ENCODE measurements at regions of chr17 and their contacts with region 1.

Region 1: GRCh38 chr17:29116804-29117772 is 63.1 kb downstream of the MYO18A start:
- DNase-seq: peak; percentile 60 to 86 (median 73)
- H3K4me3 ChIP-seq: no peak overlapping the region
- H3K4me3 Mint-ChIP-seq: no peak overlapping the region
- H3K27ac ChIP-seq: no peak overlapping the region
- H3K27ac Mint-ChIP-seq: peak overlapping the region in 4 of 8 donors; percentile 32 to 89 (median 68)
- H3K4me1 ChIP-seq: no peaks in the 10 kb centered on the region
- H3K4me1 Mint-ChIP-seq: peaks cover 4 to 8% (median 7%) of the 10 kb centered on the region in 3 donors
- H3K27me3 ChIP-seq: no peaks in the 10 kb centered on the region
- H3K27me3 Mint-ChIP-seq: no peaks in the 10 kb centered on the region

Region 2: GRCh38 chr17:28951991-28952975 is 164.8 kb before region 1 on chr17:
- CTCF ChIA-PET with region 1: interaction called, 23 read pairs
- POLR2A ChIA-PET with region 1: no interaction called
- DNase-seq: peak; percentile 91 to 98 (median 97)
- H3K4me3 ChIP-seq: peak overlapping the region; percentile 98
- H3K4me3 Mint-ChIP-seq: no peak overlapping the region
- H3K27ac ChIP-seq: peak overlapping the region; percentile 85
- H3K27ac Mint-ChIP-seq: no peak overlapping the region
- H3K4me1 ChIP-seq: peaks cover 27% of the 10 kb centered on the region
- H3K4me1 Mint-ChIP-seq: peaks cover 15 to 17% (median 15%) of the 10 kb centered on the region in 3 donors
- H3K27me3 ChIP-seq: no peaks in the 10 kb centered on the region
- H3K27me3 Mint-ChIP-seq: peaks cover 0 to 4% of the 10 kb centered on the region in 2 donors

Region 3: GRCh38 chr17:28973425-28973824 is 143.7 kb before region 1 on chr17:
- CTCF ChIA-PET with region 1: interaction called, 18 read pairs
- POLR2A ChIA-PET with region 1: no interaction called
- DNase-seq: no peak
- H3K4me3 ChIP-seq: no peak overlapping the region
- H3K4me3 Mint-ChIP-seq: no peak overlapping the region
- H3K27ac ChIP-seq: no peak overlapping the region
- H3K27ac Mint-ChIP-seq: no peak overlapping the region
- H3K4me1 ChIP-seq: no peaks in the 10 kb centered on the region
- H3K4me1 Mint-ChIP-seq: no peaks in the 10 kb centered on the region
- H3K27me3 ChIP-seq: no peaks in the 10 kb centered on the region
- H3K27me3 Mint-ChIP-seq: peaks cover 6 to 9% of the 10 kb centered on the region in 2 donors

Region 4: GRCh38 chr17:29100296-29100695 is 16.8 kb before region 1 on chr17:
- CTCF ChIA-PET with region 1: interaction called, 12 read pairs
- POLR2A ChIA-PET with region 1: no interaction called
- DNase-seq: no peak
- H3K4me3 ChIP-seq: no peak overlapping the region
- H3K4me3 Mint-ChIP-seq: no peak overlapping the region
- H3K27ac ChIP-seq: no peak overlapping the region
- H3K27ac Mint-ChIP-seq: peak overlapping the region in 3 of 8 donors; percentile 12 to 24 (median 12)
- H3K4me1 ChIP-seq: no peaks in the 10 kb centered on the region
- H3K4me1 Mint-ChIP-seq: peaks cover 0 to 9% (median 2%) of the 10 kb centered on the region in 3 donors
- H3K27me3 ChIP-seq: no peaks in the 10 kb centered on the region
- H3K27me3 Mint-ChIP-seq: no peaks in the 10 kb centered on the region

Region 5: DNA sequence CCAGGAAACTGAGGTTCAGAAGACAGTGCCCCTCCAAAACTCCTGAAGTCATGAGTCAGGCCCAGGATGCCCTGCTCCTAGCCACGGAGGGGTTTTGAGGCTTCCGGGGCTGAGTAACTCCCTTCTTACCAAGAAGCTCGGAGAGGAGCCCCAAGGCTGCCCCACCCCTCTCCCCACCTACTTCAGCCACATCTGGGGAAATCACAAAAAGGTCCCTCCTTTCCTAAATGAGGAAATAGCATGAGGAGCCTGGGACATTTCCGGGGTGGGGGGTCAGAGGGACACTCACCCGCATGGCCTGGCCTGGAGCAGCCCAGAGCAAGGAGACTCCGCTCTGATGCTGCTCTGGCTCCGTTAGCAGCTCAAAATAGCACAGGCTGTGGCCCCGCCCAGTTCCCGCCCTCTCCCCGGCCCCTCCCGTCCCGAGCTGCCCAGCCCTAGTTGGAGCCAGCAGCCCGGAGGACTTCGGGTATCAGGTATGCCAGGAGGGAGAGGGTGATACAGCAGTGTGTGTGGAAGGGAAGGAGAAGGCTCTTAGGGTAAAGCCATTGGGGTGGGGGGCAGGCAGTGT is 23.0 kb after region 1 on chr17:
- CTCF ChIA-PET with region 1: interaction called, 60 read pairs
- POLR2A ChIA-PET with region 1: no interaction called
- DNase-seq: peak; percentile 70 to 91 (median 74)
- H3K4me3 ChIP-seq: peak overlapping the region; percentile 62
- H3K4me3 Mint-ChIP-seq: peak overlapping the region; percentile 87 to 97 (median 95)
- H3K27ac ChIP-seq: peak overlapping the region; percentile 48
- H3K27ac Mint-ChIP-seq: peak overlapping the region; percentile 97 to 99 (median 98)
- H3K4me1 ChIP-seq: peaks cover 56% of the 10 kb centered on the region
- H3K4me1 Mint-ChIP-seq: peaks cover 61 to 90% (median 76%) of the 10 kb centered on the region in 3 donors
- H3K27me3 ChIP-seq: no peaks in the 10 kb centered on the region
- H3K27me3 Mint-ChIP-seq: peaks cover 0 to 2% of the 10 kb centered on the region in 2 donors

Region 6: DNA sequence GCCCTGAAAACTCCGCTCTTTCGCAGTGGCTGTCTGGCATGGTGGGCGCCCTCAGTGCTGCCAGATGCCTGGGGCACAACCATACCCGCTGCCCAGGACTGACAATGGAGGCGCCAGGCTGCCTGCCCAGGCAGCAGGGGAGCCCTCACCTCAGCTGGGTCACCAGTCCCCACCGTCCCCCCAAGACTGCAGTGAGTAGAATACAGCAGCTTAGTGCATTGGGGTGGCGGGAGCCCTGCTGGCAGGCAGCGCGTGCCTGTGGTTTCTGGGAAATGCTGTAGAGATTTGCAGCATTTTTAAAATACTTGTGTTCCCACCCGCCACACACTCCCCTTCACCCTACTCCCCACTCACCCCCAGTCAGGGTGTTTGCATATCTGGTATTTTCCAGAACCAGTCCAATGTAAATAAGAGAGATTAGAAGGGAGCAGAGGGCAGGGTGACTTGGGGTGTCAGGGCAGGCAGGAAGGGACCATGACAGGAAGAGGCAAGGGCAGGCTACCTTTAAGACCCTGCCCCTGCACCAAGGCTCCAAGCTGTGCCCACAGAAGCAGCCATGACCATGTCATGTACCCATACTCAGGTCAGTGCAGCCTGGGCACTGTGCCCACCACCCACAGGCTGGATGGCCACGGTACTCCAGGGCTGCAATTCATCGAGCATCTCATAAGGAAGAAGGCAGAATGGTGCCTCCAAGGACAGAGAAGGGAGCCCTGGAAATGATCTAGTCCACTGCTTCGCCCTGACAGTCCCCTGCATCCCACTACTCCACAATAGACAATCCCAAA is 41.6 kb after region 1 on chr17:
- CTCF ChIA-PET with region 1: no interaction called
- POLR2A ChIA-PET with region 1: no interaction called
- DNase-seq: no peak
- H3K4me3 ChIP-seq: no peak overlapping the region
- H3K4me3 Mint-ChIP-seq: peak overlapping the region in 5 of 7 donors; percentile 1 to 68 (median 48)
- H3K27ac ChIP-seq: no peak overlapping the region
- H3K27ac Mint-ChIP-seq: peak overlapping the region in 7 of 8 donors; percentile 60 to 97 (median 82)
- H3K4me1 ChIP-seq: peaks cover 32% of the 10 kb centered on the region
- H3K4me1 Mint-ChIP-seq: peaks cover 29 to 56% (median 33%) of the 10 kb centered on the region in 3 donors
- H3K27me3 ChIP-seq: no peaks in the 10 kb centered on the region
- H3K27me3 Mint-ChIP-seq: no peaks in the 10 kb centered on the region

Region 7: DNA sequence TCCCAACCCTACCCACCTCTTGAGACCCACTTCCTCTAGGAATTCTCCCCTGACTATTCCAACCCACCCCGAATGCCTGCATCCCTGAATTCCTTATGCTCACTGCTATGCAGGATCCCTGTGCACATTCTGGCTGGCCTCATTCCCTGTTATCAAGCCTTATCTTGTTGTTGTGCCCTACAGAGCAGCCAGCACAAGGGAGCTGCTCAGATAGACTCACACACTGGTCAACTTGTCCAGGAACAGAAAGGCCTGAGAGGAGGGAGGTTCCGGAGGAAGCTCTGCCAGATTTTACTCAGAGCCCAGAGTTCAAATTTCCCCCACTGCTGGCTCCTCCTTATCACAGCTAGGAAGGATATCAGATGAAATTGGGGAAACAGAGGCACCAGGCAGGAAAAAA is 88.0 kb after region 1 on chr17:
- CTCF ChIA-PET with region 1: no interaction called
- POLR2A ChIA-PET with region 1: no interaction called
- DNase-seq: no peak
- H3K4me3 ChIP-seq: no peak overlapping the region
- H3K4me3 Mint-ChIP-seq: no peak overlapping the region
- H3K27ac ChIP-seq: no peak overlapping the region
- H3K27ac Mint-ChIP-seq: peak overlapping the region in 2 of 8 donors; percentile 4 to 50
- H3K4me1 ChIP-seq: no peaks in the 10 kb centered on the region
- H3K4me1 Mint-ChIP-seq: no peaks in the 10 kb centered on the region
- H3K27me3 ChIP-seq: no peaks in the 10 kb centered on the region
- H3K27me3 Mint-ChIP-seq: peaks cover 5 to 11% of the 10 kb centered on the region in 2 donors

Region 8: DNA sequence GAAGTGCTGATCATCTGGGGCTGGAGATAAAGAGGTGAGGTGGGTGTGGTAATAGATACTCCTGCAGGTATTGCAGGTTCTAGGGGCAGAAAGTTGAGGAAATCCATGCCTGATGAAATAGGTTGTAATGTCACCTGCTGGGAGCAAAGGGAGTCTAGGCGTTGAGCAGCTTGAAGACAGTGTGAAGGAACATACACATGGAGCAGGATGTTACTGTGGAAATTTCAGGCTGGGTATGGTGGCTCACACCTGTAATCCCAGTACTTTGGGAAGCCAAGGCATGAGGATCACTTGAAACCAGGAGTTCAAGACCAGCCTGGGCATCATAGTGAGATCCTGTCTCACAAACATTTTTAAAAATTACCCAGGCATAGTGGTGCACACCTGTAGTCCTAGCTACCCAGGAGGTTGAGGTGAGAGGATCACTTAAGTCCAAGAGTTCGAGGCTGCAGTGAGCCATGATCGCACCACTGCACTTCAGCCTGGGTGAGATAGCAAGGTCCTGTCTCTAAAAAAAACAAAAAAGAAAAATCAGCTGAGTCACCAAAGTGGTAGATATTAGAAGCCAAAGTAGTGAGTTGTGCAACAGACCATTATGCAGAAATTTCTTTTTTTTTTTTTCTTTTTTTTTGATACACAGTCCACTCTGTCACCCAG is 120.5 kb after region 1 on chr17:
- CTCF ChIA-PET with region 1: no interaction called
- POLR2A ChIA-PET with region 1: no interaction called
- DNase-seq: no peak
- H3K4me3 ChIP-seq: no peak overlapping the region
- H3K4me3 Mint-ChIP-seq: no peak overlapping the region
- H3K27ac ChIP-seq: no peak overlapping the region
- H3K27ac Mint-ChIP-seq: no peak overlapping the region
- H3K4me1 ChIP-seq: no peaks in the 10 kb centered on the region
- H3K4me1 Mint-ChIP-seq: no peaks in the 10 kb centered on the region
- H3K27me3 ChIP-seq: no peaks in the 10 kb centered on the region
- H3K27me3 Mint-ChIP-seq: no peaks in the 10 kb centered on the region

Region 9: DNA sequence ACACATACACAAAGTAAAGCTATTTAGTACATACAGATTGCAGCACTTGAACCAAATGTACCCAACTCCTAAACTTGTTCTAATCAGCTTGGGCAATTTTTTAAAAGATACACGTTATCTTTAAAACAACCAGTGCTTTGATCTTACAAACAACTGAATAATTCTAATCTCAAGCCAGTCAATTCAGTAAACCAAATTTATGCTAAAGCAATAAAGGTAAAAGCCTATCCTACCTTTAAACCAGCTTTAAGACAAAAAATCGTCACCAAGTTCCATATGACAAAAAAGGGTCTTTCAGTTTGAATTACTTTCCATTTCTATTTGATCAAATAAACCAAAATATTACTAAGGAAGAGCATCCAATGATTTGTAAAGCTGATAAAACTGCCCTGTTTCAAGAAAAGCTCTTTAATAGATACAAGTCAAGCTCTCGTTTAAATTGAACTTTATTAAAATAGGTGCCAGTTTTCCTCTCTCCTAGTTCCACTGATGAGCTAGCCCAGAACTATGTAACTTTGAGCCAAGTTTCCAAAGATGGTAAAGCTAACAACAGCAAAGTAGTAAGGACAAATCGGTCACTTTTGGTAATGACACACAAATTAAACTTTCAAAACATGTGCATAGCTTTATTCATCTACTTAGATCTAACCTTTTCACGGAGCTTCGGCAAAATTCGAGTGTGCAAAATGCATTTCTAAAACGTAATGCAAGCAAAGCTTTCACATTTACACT is 139.8 kb after region 1 on chr17:
- CTCF ChIA-PET with region 1: no interaction called
- POLR2A ChIA-PET with region 1: no interaction called
- DNase-seq: no peak
- H3K4me3 ChIP-seq: no peak overlapping the region
- H3K4me3 Mint-ChIP-seq: no peak overlapping the region
- H3K27ac ChIP-seq: no peak overlapping the region
- H3K27ac Mint-ChIP-seq: peak overlapping the region in 7 of 8 donors; percentile 4 to 79 (median 36)
- H3K4me1 ChIP-seq: peaks cover 2% of the 10 kb centered on the region
- H3K4me1 Mint-ChIP-seq: peaks cover 31 to 61% (median 49%) of the 10 kb centered on the region in 3 donors
- H3K27me3 ChIP-seq: no peaks in the 10 kb centered on the region
- H3K27me3 Mint-ChIP-seq: no peaks in the 10 kb centered on the region

Measured in CD8-positive, alpha-beta memory T cell (primary cell).